Left lung (tissue), 14 donors: ENCODE measurements at regions of chr17 and their contacts with region 1.

Region 1: DNA sequence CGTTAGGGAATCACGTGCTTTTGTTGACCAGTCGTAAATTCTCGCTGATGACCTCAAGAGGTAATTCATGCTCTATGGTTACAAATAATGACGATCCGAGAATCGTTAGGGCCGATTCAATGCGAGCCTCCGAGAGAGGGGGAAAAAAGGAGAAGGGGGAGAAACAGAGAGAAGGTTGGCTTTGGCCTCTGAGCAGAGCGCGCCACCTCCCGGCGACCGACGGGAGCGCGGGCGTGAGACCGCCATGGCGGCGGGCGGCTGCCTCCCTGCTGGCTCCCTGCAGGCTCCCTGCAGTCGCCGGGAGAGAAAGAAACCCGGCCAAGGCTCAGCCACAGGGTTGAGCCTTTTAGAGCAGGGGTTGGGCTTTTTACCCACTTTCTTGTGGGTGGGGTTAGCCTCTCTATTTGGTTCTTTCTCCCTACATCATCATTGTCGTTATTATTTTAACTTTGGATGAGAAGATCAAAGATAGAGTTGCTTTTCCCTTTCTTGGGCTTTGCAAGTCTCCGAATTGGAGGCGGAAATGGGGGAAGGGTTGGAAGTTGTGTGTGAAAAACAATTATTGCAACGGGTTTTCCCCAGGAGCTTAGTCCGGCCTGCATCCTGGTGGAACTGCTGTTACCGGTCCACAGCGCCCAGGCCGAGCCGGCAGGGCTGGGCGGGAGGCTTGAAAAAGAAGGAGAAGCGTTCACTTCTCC is 410 bp upstream of the HOXB5 start:
- DNase-seq: peak; percentile 72 to 97 (median 92)
- ATAC-seq: peak; percentile 77
- H3K4me3 ChIP-seq: no peak overlapping the region
- H3K27ac ChIP-seq: peak overlapping the region; percentile 42 to 90
- H3K4me1 ChIP-seq: peaks cover 12 to 36% of the 10 kb centered on the region in 2 donors
- H3K27me3 ChIP-seq: peaks cover 62 to 100% of the 10 kb centered on the region in 2 donors
- CTCF ChIP-seq: peak; percentile 84 to 92

Region 2: DNA sequence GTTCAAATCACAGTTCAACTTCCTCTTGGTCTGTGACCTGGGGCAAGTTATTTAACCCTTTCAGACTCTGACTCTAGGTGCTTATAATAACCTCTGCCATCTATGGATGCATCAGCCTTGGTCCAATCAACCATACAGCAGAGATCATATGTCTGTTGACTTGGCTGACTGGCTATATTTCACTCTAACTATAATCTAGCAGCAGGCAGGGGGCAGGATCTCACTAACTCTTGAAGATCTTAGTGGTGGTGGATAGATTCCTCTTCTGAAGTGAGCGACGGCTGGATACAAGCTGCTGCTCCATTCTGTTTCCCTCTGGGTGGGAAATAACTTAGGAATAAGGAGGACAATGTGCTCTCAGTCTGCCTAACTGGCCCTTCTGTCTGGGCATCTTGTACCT is 310.6 kb before region 1 on chr17:
- intact Hi-C with region 1: no loop called
- DNase-seq: no peak
- ATAC-seq: no peak
- H3K4me3 ChIP-seq: no peak overlapping the region
- H3K27ac ChIP-seq: no peak overlapping the region
- H3K4me1 ChIP-seq: no peaks in the 10 kb centered on the region
- H3K27me3 ChIP-seq: peaks cover 0 to 30% of the 10 kb centered on the region in 2 donors
- CTCF ChIP-seq: no peak

Region 3: GRCh38 chr17:48344246-48344645 is 249.7 kb before region 1 on chr17:
- intact Hi-C with region 1: loop called in 1 of 2 experiments (anchors 10 kb)
- DNase-seq: no peak
- ATAC-seq: no peak
- H3K4me3 ChIP-seq: no peak overlapping the region
- H3K27ac ChIP-seq: no peak overlapping the region
- H3K4me1 ChIP-seq: no peaks in the 10 kb centered on the region
- H3K27me3 ChIP-seq: peaks cover 31 to 48% of the 10 kb centered on the region in 2 donors
- CTCF ChIP-seq: no peak

Region 4: DNA sequence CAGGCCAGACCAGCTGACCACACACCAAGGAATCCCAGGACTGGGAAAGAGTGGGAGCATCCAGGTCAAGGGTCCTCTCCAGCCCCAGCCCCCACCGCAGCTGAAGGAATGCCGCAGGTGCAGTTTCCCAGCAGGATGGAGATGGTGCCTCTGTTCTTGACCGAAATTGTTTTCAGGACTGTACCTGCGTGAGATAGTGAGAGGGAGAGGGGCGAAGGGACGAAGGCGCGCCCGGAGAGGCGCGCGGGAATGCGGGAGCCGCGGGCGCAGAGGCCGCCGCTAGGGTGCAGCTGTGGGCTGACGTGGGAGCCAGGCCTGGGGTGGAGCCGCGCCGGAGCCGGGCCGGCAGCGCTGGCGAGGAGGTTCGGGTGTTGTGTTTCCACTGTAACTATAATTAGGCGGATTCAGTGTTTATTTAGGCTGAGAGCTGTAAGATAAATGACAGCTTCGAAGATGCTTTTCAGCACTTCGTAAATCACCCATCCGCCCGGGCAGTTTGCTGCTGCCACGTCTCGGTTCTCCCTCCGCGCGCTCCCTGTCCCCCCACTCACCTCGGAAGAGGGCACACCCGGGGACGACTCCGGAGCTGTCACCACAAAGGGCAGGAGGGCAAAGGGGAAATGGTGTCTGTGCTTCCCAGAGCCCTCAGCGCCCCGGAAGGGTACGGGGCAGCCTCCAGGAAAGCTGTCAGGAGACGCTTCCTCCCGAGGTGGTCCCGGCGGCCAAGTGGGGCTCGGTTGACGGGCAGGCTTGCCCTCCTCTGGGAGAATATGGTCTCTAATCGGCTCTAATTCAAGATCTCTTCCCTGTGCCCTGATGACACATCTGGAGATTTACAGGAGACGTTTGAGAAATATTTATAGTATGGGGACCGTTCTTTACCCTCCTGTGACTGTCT is 101.3 kb before region 1 on chr17:
- intact Hi-C with region 1: loop called in 1 of 2 experiments (anchors 5 kb)
- DNase-seq: peak; percentile 62 to 88 (median 77)
- ATAC-seq: peak; percentile 95
- H3K4me3 ChIP-seq: peak overlapping the region in 1 of 2 donors; percentile 13
- H3K27ac ChIP-seq: peak overlapping the region in 1 of 2 donors; percentile 15
- H3K4me1 ChIP-seq: peaks cover 4 to 24% of the 10 kb centered on the region in 2 donors
- H3K27me3 ChIP-seq: peaks cover under 1 to 68% of the 10 kb centered on the region in 2 donors
- CTCF ChIP-seq: peak; percentile 73 to 79